ENCODE measurements at regions of chr2 and their contacts with region 1.

Region 1: GRCh38 chr2:138324068-138324771 is 177.3 kb upstream of the SPOPL start:
- DNase-seq: no peak
- ATAC-seq: no peak

Region 2: DNA sequence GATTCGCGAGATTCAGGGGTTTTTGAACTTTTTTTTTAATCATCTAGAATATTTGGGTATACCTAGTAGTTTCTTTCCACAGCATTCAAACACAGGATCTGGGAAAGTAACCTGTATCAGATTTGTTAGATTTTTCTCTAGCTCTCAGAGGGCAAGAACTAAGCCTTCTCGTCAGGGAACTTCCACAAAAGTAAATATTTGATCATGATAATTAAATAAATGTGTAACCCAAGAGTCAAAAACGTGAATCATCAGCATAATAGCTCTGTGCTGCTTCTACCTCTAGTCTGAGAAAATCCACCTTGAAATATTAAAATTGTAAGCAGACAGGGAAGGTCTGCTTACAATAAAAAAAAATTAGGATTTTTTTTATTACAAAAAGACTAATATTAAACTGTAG is 48.3 kb before region 1 on chr2:
- intact Hi-C with region 1: no loop called
- DNase-seq: no peak
- ATAC-seq: no peak

Region 3: DNA sequence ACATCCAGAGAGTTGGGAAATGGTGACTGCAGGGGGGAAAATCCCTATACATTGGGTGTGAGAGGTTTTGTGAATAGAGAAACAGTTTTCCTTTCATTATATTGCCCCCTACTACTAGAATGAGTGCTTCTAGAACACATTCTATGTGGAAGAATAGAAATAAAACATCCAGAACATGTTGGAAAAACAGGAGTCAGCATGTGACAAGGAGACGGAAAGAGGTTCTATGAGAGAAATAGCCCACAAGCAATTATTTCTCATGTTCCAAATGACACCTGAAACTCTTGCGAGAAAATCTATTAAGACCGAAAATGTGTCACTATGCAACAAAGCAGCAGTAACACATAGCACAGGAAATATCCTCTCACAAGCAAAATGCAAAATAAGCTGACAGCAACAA is 25.3 kb before region 1 on chr2:
- intact Hi-C with region 1: loop called (anchors 1 kb)
- DNase-seq: no peak
- ATAC-seq: no peak

Measured in sciatic nerve (tissue), 2 donors.